ENCODE measurements at regions of chr15 and their contacts with region 1.

Region 1: GRCh38 chr15:90648137-90649070 is 68.7 kb upstream of the BLM start:
- DNase-seq: peak; percentile 48 to 62
- ATAC-seq: peak; percentile 65 to 83
- H3K4me3 ChIP-seq: peak overlapping the region in 1 of 4 donors; percentile 37
- H3K27ac ChIP-seq: peak overlapping the region; percentile 58 to 79 (median 68)
- H3K4me1 ChIP-seq: peaks cover 3 to 4% of the 10 kb centered on the region in 2 donors
- H3K27me3 ChIP-seq: no peaks in the 10 kb centered on the region
- CTCF ChIP-seq: peak; percentile 92 to 95 (median 94)
- POLR2A ChIP-seq: peak in 1 of 2 donors; percentile 13

Region 2: DNA sequence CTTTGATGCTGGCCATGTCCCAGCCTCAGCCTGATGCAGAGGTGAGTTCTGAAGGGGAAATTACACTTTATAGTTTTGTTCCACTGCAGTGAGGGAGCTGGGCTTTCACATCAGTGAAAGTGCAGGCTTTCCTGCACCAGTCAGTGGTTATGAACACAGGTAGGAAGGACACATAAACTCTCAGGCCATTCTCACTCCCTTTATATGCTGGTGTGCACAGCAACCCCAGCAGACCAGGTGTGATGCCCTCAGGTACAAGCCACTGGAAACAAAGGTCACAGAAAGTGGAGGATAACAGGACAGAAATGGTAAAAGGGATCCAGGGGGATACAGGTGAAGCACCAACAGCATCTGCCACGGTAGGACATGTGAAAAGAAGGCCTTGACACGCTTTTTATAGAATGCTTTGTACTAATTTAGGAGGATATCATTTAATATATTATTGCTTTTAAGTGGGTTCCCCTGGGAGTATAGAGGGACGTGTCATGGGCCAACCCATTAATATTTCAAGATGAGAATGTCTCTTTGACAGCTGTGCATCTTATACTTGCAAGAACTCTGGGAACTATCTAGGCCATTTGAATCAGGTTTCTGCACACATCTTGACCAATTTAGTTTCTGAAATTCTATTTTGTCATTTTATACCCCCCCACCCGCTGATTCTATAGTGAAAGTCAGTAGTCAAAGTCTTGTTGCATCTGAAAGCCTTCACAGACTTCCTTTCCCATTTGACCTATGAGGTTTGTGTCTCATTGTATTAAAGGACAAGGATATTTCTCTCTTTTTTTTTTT is 43.8 kb after region 1 on chr15:
- in situ Hi-C with region 1: loop called (anchors 5 to 10 kb)
- intact Hi-C with region 1: loop called (anchors 1 kb)
- DNase-seq: no peak
- ATAC-seq: no peak
- H3K4me3 ChIP-seq: no peak overlapping the region
- H3K27ac ChIP-seq: no peak overlapping the region
- H3K4me1 ChIP-seq: no peaks in the 10 kb centered on the region
- H3K27me3 ChIP-seq: no peaks in the 10 kb centered on the region
- CTCF ChIP-seq: no peak
- POLR2A ChIP-seq: no peak

Region 3: DNA sequence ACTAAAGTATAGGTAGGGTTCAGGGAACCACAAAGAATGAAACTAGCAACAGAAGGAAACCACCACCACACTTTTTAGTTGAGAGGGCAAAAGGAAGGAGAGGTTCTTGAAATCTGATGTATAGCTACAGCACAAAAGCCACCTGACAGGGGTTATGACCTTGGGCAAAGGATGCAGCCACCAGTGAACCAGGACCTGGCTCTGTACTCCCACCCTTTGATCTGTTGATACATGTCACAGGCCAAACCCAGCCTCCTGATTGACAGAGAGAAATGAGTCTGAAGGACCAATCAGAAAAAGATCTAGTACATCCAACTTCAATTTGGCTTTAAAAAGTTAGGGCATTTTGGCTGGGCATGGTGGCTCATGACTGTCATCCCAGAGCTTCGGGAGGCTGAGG is 48.8 kb after region 1 on chr15:
- in situ Hi-C with region 1: loop called (anchors 5 to 10 kb)
- intact Hi-C with region 1: loop called (anchors 1 kb)
- DNase-seq: no peak
- ATAC-seq: no peak
- H3K4me3 ChIP-seq: no peak overlapping the region
- H3K27ac ChIP-seq: no peak overlapping the region
- H3K4me1 ChIP-seq: no peaks in the 10 kb centered on the region
- H3K27me3 ChIP-seq: no peaks in the 10 kb centered on the region
- CTCF ChIP-seq: no peak
- POLR2A ChIP-seq: no peak

Region 4: DNA sequence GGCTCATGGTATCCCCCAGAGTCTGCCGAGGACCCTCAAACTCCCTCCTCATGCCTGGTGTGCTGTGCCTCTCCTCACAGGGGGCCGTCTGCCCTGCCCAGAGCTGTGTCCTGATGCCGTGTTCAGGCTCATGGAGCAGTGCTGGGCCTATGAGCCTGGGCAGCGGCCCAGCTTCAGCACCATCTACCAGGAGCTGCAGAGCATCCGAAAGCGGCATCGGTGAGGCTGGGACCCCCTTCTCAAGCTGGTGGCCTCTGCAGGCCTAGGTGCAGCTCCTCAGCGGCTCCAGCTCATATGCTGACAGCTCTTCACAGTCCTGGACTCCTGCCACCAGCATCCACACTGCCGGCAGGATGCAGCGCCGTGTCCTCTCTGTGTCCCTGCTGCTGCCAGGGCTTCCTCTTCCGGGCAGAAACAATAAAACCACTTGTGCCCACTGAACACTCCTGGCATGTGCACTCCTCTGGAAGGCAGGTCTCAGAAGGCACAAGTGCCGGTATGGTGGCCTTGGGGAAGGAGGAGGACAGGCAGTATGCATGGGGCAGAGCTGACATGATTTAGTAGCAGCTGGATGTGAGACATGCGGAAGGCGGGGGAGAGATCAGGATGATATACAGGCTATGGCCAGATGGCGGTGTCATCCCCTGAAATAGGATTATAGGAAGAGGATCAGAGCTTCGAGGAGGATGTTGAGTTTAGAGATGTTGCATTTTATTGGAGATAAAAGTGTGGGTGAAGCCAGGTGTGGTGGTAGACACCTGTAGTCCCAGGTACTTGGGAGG is 247.1 kb after region 1 on chr15:
- in situ Hi-C with region 1: loop called in 1 of 4 experiments (anchors 10 kb)
- intact Hi-C with region 1: no loop called
- DNase-seq: no peak
- ATAC-seq: no peak
- H3K4me3 ChIP-seq: no peak overlapping the region
- H3K27ac ChIP-seq: no peak overlapping the region
- H3K4me1 ChIP-seq: no peaks in the 10 kb centered on the region
- H3K27me3 ChIP-seq: no peaks in the 10 kb centered on the region
- CTCF ChIP-seq: no peak
- POLR2A ChIP-seq: no peak